Naive thymus-derived CD4-positive, alpha-beta T cell (primary cell): ENCODE measurements at regions of chr11 and their contacts with region 1.

Region 1: DNA sequence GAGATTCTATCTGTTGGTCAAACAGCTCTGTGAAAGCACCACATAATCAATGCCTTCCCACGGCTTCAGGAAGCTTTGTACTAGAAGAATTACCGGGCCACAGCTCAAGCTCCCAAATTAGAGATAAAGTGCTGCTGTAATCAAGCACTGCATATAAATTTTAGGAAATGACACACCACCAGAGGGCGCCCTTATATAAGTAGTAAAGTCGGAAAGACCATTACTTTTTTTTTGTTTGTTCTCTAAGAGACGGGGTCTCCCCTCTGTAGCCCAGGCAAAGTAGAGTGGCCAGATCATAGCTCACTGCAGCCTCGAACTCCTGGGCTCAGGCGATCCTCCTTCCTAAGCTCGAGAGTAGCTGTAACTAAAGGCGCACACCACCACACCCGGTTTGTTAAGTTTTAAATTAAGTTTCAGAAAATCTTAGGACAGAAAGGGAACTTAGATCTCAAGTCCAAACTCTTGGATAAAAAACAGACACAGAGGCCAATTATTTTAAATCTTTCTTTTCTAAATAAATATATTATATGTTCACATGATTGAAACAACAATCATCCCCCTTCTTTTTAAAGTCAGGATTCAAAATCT is 32.6 kb downstream of the PRCP start:
- DNase-seq: peak; percentile 47 to 78 (median 73)
- ATAC-seq: peak; percentile 84
- H3K4me3 ChIP-seq: no peak overlapping the region
- H3K4me3 Mint-ChIP-seq: peak overlapping the region in 8 of 10 donors; percentile 22 to 78 (median 60)
- H3K27ac ChIP-seq: no peak overlapping the region
- H3K27ac Mint-ChIP-seq: peak overlapping the region in 5 of 9 donors; percentile 4 to 67 (median 33)
- H3K4me1 ChIP-seq: peaks cover 0 to 4% of the 10 kb centered on the region in 2 donors
- H3K4me1 Mint-ChIP-seq: peaks cover 3 to 12% (median 11%) of the 10 kb centered on the region in 7 donors
- H3K27me3 ChIP-seq: no peaks in the 10 kb centered on the region
- H3K27me3 Mint-ChIP-seq: peaks cover 0 to 7% (median 0%) of the 10 kb centered on the region in 5 donors

Region 2: DNA sequence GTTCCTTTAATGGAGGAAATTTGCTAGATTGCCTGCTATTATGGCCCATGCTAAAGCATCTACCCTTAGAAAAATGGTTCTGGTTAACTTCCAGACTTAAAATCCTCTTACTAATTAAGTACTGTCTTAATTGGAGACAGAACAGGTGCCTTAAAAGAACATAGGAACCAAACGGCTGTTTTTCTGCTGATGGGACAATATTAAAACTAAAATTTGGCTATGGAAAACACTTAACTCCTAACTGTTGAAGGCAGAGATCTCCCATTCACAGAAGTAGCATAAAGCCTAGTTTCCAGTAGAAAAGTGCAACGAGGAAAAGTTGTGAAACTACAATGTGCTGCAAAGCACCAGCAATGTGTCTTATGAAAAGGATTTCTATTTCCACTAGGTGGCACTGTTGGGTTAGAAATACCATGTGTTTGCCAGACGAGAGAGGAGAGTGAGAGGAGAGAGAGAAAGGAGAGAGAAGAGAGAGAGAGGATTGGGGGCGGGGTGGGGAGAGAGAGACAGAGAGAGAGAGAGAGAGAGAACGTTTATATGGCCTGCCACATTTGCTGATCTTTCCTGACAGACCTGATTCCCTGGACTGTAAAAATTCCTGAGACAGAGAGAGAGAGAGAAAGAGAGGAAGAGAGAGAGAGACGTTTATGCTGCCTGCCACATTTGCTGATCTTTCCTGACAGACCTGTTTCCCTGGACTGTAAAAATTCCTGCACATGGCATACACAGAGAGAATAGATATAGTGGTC is 185.4 kb before region 1 on chr11:
- CTCF ChIA-PET with region 1: interaction called, 4 read pairs
- POLR2A ChIA-PET with region 1: no interaction called
- intact Hi-C with region 1: loop called in 1 of 2 experiments (anchors 1 kb)
- DNase-seq: peak in 7 of 9 donors; percentile 24 to 55 (median 38)
- ATAC-seq: peak; percentile 72
- H3K4me3 ChIP-seq: no peak overlapping the region
- H3K4me3 Mint-ChIP-seq: peak overlapping the region in 1 of 10 donors; percentile 5
- H3K27ac ChIP-seq: no peak overlapping the region
- H3K27ac Mint-ChIP-seq: peak overlapping the region in 2 of 9 donors; percentile 2 to 19
- H3K4me1 ChIP-seq: no peaks in the 10 kb centered on the region
- H3K4me1 Mint-ChIP-seq: peaks cover 0 to 5% (median 0%) of the 10 kb centered on the region in 7 donors
- H3K27me3 ChIP-seq: no peaks in the 10 kb centered on the region
- H3K27me3 Mint-ChIP-seq: peaks cover 8 to 20% (median 17%) of the 10 kb centered on the region in 5 donors

Region 3: GRCh38 chr11:82733444-82734119 is 134.0 kb before region 1 on chr11 and contains the start of gene FAM181B:
- CTCF ChIA-PET with region 1: interaction called, 4 read pairs
- POLR2A ChIA-PET with region 1: no interaction called
- intact Hi-C with region 1: loop called in 1 of 2 experiments (anchors 1 kb)
- DNase-seq: peak; percentile 32 to 54 (median 44)
- ATAC-seq: peak; percentile 80
- H3K4me3 ChIP-seq: peak within 1 kb of the TSS; percentile 51
- H3K4me3 Mint-ChIP-seq: peak within 1 kb of the TSS; percentile 72 to 84 (median 78)
- H3K27ac ChIP-seq: no peak within 1 kb of the TSS
- H3K27ac Mint-ChIP-seq: peak within 1 kb of the TSS in 2 of 9 donors; percentile 5 to 15
- H3K4me1 ChIP-seq: no peaks in the 10 kb centered on the region
- H3K4me1 Mint-ChIP-seq: peaks cover 8 to 31% (median 24%) of the 10 kb centered on the region in 7 donors
- H3K27me3 ChIP-seq: peaks cover 4 to 8% of the 10 kb centered on the region in 2 donors
- H3K27me3 Mint-ChIP-seq: peaks cover 32 to 80% (median 51%) of the 10 kb centered on the region in 5 donors
- total RNA-seq, gene FAM181B: 0.10 to 0.97 (median 0.40) TPM in 4 of 5 experiments, not detected in the other

Region 4: DNA sequence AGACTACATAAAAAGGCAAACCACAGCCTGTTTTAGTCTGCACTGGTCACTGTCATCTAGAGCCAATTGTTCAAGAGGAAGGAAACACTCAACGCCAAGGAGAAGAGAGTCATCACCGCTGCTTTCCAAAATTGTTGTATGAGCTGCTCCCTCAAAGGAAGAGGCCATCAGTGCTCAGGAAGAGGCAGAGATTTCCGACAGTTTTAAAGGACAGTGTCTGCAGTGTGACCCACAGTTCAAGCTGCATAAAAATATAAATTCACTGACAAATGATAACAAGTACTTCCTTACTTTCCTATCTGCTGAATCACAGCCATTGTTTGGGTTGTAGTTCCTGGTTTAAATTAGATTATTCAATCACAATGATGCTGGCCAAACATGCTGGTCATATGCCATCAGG is 16.3 kb after region 1 on chr11:
- CTCF ChIA-PET with region 1: interaction called, 11 read pairs
- POLR2A ChIA-PET with region 1: no interaction called
- intact Hi-C with region 1: loop called in 1 of 2 experiments (anchors 2 kb)
- DNase-seq: no peak
- ATAC-seq: peak; percentile 48
- H3K4me3 ChIP-seq: no peak overlapping the region
- H3K4me3 Mint-ChIP-seq: no peak overlapping the region
- H3K27ac ChIP-seq: no peak overlapping the region
- H3K27ac Mint-ChIP-seq: no peak overlapping the region
- H3K4me1 ChIP-seq: no peaks in the 10 kb centered on the region
- H3K4me1 Mint-ChIP-seq: peaks cover 0 to 15% (median 0%) of the 10 kb centered on the region in 7 donors
- H3K27me3 ChIP-seq: no peaks in the 10 kb centered on the region
- H3K27me3 Mint-ChIP-seq: no peaks in the 10 kb centered on the region

Region 5: DNA sequence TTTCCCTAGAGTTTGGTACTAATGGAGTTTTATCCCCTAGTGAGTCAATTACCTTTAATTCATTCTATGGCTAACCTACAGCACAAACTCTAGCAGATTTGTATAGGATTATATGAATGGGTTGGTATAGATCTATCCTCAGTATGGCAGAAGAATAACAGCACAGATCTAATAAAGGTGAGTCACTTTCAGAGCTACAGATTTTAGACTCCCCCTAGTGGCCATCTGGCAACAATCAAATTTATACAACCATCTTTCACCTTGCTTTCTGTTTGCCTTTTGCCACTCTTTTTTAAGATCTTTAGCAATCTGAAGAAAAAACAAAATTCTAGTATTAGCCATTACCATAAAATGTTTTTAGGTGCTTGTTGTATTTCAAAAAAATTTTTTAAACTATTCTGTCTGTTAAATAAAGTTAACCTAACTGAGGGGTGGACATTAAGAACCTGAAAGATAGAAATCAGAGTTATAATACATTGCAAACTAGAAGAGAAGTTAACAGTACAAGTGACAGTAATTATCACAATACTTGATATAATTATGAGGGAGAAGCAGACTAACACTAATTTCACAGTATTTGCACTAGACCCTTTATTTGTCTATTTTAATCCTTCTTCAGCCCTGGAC is 59.8 kb after region 1 on chr11:
- CTCF ChIA-PET with region 1: interaction called, 4 read pairs
- POLR2A ChIA-PET with region 1: no interaction called
- intact Hi-C with region 1: loop called (anchors 1 kb)
- DNase-seq: peak in 7 of 9 donors; percentile 51 to 77 (median 67)
- ATAC-seq: peak; percentile 89
- H3K4me3 ChIP-seq: no peak overlapping the region
- H3K4me3 Mint-ChIP-seq: peak overlapping the region in 2 of 10 donors; percentile 10 to 63
- H3K27ac ChIP-seq: no peak overlapping the region
- H3K27ac Mint-ChIP-seq: peak overlapping the region in 8 of 9 donors; percentile 26 to 76 (median 52)
- H3K4me1 ChIP-seq: peaks cover 0 to 23% of the 10 kb centered on the region in 2 donors
- H3K4me1 Mint-ChIP-seq: peaks cover 10 to 55% (median 45%) of the 10 kb centered on the region in 7 donors
- H3K27me3 ChIP-seq: no peaks in the 10 kb centered on the region
- H3K27me3 Mint-ChIP-seq: no peaks in the 10 kb centered on the region

Region 6: GRCh38 chr11:83249972-83250593 is 382.5 kb after region 1 on chr11:
- CTCF ChIA-PET with region 1: interaction called, 36 read pairs
- POLR2A ChIA-PET with region 1: interaction called, 3 read pairs
- intact Hi-C with region 1: loop called (anchors 1 kb)
- DNase-seq: peak in 7 of 9 donors; percentile 12 to 48 (median 40)
- ATAC-seq: peak; percentile 77
- H3K4me3 ChIP-seq: no peak overlapping the region
- H3K4me3 Mint-ChIP-seq: peak overlapping the region in 1 of 10 donors; percentile 32
- H3K27ac ChIP-seq: no peak overlapping the region
- H3K27ac Mint-ChIP-seq: no peak overlapping the region
- H3K4me1 ChIP-seq: no peaks in the 10 kb centered on the region
- H3K4me1 Mint-ChIP-seq: peaks cover 0 to 7% (median 0%) of the 10 kb centered on the region in 7 donors
- H3K27me3 ChIP-seq: no peaks in the 10 kb centered on the region
- H3K27me3 Mint-ChIP-seq: no peaks in the 10 kb centered on the region

Region 7: GRCh38 chr11:84476581-84476980 is 1609.0 kb after region 1 on chr11:
- CTCF ChIA-PET with region 1: no interaction called
- POLR2A ChIA-PET with region 1: no interaction called
- intact Hi-C with region 1: no loop called
- DNase-seq: no peak
- ATAC-seq: no peak
- H3K4me3 ChIP-seq: no peak overlapping the region
- H3K4me3 Mint-ChIP-seq: no peak overlapping the region
- H3K27ac ChIP-seq: no peak overlapping the region
- H3K27ac Mint-ChIP-seq: no peak overlapping the region
- H3K4me1 ChIP-seq: no peaks in the 10 kb centered on the region
- H3K4me1 Mint-ChIP-seq: no peaks in the 10 kb centered on the region
- H3K27me3 ChIP-seq: no peaks in the 10 kb centered on the region
- H3K27me3 Mint-ChIP-seq: no peaks in the 10 kb centered on the region